ENCODE measurements at regions of chr15 and their contacts with region 1.

Region 1: GRCh38 chr15:71752604-71753289 is 57.6 kb upstream of the NR2E3 start:
- DNase-seq: peak; percentile 97
- ATAC-seq: peak; percentile 76
- H3K4me3 ChIP-seq: no peak overlapping the region
- H3K27ac ChIP-seq: peak overlapping the region; percentile 88
- H3K4me1 ChIP-seq: peaks cover 42% of the 10 kb centered on the region
- H3K27me3 ChIP-seq: no peaks in the 10 kb centered on the region
- CTCF ChIP-seq: peak; percentile 85

Region 2: GRCh38 chr15:71496336-71496955 is 256.3 kb before region 1 on chr15:
- CTCF ChIA-PET with region 1: no interaction called
- POLR2A ChIA-PET with region 1: no interaction called
- intact Hi-C with region 1: no loop called
- DNase-seq: peak; percentile 48
- ATAC-seq: peak; percentile 73
- H3K4me3 ChIP-seq: no peak overlapping the region
- H3K27ac ChIP-seq: no peak overlapping the region
- H3K4me1 ChIP-seq: peaks cover 10% of the 10 kb centered on the region
- H3K27me3 ChIP-seq: no peaks in the 10 kb centered on the region
- CTCF ChIP-seq: no peak

Region 3: DNA sequence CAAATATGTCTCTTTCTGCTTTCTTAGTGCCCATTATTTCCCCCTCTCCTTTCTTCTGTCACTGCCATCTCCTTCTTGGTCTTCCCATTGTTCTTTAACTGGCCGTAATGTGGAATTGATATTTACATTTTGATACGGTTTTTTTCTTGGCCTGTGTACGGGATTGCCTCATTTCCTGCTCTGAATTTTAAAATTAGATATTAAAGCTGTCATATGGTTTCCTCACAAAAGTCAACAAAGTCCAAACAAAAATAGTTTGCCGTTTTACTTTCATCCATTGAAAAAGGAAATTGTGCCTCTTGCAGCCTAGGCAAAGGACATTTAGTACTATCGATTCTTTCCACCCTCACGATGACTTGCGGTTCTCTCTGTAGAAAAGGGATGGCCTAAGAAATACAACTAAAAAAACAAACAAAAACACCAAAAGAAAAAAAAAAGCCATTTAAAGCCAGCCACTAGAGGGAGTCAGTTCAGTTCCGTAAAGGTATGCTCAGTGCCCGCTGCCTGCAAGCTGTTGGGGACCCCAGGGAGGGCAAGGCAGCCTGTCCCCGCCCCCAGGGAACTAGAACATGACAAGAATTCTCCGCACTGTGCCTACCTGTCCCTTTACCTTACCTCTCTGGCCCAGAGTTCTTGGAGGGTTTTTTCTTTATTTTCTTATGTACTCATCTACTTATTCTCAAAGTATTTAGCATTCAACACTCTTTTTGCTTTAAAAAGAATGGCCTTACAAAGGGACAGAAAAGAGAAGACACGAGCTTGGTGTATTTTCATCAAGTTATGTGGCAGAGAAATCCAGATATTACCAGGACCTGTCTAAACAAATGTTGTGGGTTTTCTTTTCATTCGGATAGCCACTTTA is 27.6 kb after region 1 on chr15:
- CTCF ChIA-PET with region 1: interaction called, 12 read pairs
- POLR2A ChIA-PET with region 1: no interaction called
- intact Hi-C with region 1: no loop called
- DNase-seq: peak; percentile 74
- ATAC-seq: peak; percentile 66
- H3K4me3 ChIP-seq: peak overlapping the region; percentile 14; the same call in 1 of the 2 replicates
- H3K27ac ChIP-seq: peak overlapping the region; percentile 61
- H3K4me1 ChIP-seq: peaks cover 34% of the 10 kb centered on the region
- H3K27me3 ChIP-seq: no peaks in the 10 kb centered on the region
- CTCF ChIP-seq: peak; percentile 87

Region 4: DNA sequence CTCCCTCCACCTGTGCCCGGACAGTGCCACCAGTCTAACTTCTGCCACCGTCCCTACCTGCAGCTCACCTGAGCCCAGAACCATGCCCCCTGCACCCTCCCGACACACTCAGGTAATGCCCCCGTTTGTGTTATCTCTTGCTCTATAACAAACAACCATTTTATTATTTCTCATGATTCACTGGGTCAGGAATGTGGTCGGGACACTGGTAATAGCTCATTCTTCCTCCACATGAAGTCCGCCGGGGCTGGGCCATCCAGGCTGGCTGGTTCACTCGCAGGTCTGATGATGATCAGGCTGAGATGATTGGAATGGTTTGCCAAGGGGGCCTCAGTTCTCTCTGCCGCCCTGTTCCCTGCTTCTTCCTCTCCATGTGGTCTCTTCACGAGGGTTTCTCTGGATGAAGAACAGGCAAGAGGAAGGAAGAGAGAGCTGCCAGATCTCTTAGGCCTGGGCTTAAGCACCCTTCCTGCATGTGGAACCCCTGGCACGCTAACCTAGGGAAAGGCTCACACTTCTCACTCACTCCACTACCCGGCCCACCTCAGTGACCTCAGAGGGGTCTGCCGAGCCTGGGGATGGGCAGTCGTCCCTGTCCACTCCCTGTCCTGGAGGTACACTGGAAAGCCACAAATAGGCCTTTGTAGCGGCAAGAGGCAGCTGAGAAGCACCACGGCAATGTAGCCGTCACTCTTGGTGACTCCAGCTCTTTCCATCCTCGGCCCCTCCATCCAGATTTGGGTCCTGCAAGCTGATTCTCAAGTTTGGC is 37.5 kb after region 1 on chr15:
- CTCF ChIA-PET with region 1: interaction called, 10 read pairs
- POLR2A ChIA-PET with region 1: no interaction called
- intact Hi-C with region 1: loop called (anchors 2 kb)
- DNase-seq: peak; percentile 88
- ATAC-seq: peak; percentile 67
- H3K4me3 ChIP-seq: peak overlapping the region; percentile 12; the same call in 1 of the 2 replicates
- H3K27ac ChIP-seq: peak overlapping the region; percentile 96
- H3K4me1 ChIP-seq: peaks cover 41% of the 10 kb centered on the region
- H3K27me3 ChIP-seq: no peaks in the 10 kb centered on the region
- CTCF ChIP-seq: no peak

Region 5: GRCh38 chr15:72155635-72156616 is 403.2 kb after region 1 on chr15:
- CTCF ChIA-PET with region 1: interaction called, 3 read pairs
- POLR2A ChIA-PET with region 1: no interaction called
- intact Hi-C with region 1: loop called (anchors 1 kb)
- DNase-seq: peak; percentile 92
- ATAC-seq: peak; percentile 94
- H3K4me3 ChIP-seq: peak overlapping the region; percentile 73
- H3K27ac ChIP-seq: no peak overlapping the region
- H3K4me1 ChIP-seq: peaks cover 12% of the 10 kb centered on the region
- H3K27me3 ChIP-seq: no peaks in the 10 kb centered on the region
- CTCF ChIP-seq: peak; percentile 93

Measured in PC-3 (cell line).